Mucosa of descending colon (tissue), 3 donors: ENCODE measurements at regions of chr21 and their contacts with region 1.

Region 1: GRCh38 chr21:33789697-33790096 is 125.9 kb downstream of the ATP5PO start:
- DNase-seq: no peak
- ATAC-seq: no peak
- H3K4me3 ChIP-seq: no peak overlapping the region
- H3K4me1 ChIP-seq: no peaks in the 10 kb centered on the region
- CTCF ChIP-seq: no peak

Region 2: GRCh38 chr21:33844104-33844889 is 54.6 kb after region 1 on chr21:
- intact Hi-C with region 1: loop called in 1 of 2 experiments (anchors 10 kb)
- DNase-seq: no peak
- ATAC-seq: no peak
- H3K4me3 ChIP-seq: no peak overlapping the region
- H3K4me1 ChIP-seq: peaks cover 6% of the 10 kb centered on the region
- CTCF ChIP-seq: no peak